ENCODE measurements at regions of chr2 and their contacts with region 1.

Region 1: GRCh38 chr2:161308178-161308955 is at the start of gene PSMD14:
- DNase-seq: peak; percentile 86 to 98 (median 92)

Region 2: DNA sequence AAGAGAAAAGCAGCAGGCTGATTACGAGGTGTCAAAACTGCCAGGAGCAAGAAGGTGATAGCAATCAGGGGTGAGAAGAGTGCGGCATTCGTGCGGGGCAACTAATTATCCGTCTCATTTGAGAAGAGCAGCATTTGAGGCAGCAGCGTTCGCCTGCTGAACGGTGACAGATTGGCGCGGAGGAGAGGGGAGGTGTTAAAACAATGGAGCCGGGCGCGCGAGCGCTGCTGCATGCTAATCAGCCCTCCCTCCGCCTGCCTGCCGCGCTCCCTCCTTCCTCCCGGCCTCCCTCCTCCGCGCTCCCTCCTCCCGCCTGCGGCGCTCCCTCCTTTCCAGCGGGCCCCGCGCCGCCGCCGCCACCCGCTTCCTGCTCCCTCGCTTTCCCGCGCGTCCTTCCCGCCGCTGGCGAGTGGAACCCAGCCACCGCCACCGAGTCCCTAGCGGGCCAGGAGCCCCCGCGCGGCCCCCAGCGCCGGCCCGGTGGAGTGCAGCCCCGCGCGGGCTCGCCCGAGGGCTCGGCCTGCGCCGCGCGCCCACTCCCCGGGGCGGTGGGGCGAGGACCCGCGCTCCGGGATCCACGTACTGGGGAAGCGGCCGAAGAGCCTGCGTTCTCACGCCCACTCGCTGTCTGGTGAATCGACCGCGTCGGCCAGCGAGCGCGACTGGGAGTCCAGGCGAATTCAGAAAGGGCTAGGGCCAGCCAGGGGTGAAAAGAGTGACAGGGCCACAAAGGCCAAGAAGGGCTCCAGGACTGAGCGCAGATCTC is 69.6 kb before region 1 on chr2:
- intact Hi-C with region 1: loop called (anchors 5 kb)
- DNase-seq: peak; percentile 80 to 98 (median 90)

Region 3: DNA sequence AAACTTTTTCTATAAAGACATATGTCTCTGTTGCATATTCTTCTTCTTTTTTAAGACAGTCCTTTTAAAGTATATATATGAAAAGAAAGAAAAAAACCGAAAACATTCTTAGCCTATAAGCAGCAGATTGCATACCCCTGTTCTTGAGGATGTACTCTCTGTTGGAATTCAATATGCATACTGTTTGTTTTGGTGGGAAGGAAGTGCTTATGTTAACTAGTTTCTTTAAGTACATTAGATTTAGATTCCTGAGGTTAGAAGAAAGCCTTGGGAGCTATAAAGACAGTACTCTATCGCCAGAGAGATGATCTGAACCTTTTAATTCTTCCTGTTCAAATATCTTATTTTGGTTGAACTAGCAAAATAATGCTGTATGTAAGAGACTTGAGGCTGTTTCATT is 60.9 kb after region 1 on chr2:
- intact Hi-C with region 1: no loop called
- DNase-seq: no peak

Region 4: DNA sequence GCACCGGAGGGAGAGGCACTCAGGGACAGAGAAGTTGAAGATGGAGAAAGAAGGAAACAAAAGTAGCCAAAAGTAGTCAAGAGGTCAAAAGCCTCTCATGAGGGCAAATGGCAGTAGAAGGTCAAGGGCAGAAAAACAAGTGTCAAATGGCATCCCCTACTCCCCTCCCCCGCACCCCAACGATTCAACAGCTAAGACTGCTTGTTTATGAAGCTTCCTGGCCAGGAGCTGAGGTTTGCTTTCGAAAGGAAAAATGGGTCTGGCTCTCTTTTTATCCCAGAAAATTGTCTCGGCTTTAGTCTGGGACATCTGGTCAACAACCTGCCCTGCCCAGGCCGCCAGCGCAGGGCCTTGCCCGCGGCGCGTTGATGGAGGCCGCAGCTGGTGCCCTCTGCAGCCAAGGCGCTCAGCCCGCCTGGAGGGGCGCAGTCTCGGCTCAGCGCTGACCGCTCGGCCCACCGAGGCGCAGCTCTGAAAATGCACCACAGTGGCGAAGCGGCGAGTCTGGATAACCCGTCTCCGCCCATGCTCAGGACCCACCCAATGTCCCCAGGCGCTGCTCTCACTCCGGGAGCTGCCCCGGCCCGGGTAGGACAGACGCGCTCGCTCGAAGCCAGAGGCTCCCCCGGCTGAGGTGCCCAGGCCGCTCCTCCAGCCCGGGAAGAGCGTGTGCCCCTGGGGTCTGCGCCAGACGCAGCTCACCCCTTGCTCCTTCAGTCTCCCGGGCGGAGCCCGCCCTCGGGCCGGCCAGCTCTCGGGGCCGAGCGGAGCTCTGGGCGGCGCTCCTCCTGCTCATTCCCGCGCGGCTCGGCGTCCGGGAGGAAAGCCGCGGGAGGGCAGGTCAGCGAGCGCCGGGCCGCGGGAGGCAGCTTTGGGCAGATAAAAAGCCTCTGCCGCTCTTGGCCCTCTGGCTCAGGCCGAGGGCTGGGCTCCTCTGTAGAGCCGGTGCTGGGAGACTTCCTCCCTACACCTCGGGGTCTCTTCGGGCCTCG is 106.0 kb after region 1 on chr2:
- intact Hi-C with region 1: loop called (anchors 10 kb)
- DNase-seq: peak in 8 of 10 donors; percentile 34 to 92 (median 50)

Measured in posterior cingulate gyrus (tissue), 11 donors.